ENCODE measurements at regions of chr17 and their contacts with region 1.

Region 1: DNA sequence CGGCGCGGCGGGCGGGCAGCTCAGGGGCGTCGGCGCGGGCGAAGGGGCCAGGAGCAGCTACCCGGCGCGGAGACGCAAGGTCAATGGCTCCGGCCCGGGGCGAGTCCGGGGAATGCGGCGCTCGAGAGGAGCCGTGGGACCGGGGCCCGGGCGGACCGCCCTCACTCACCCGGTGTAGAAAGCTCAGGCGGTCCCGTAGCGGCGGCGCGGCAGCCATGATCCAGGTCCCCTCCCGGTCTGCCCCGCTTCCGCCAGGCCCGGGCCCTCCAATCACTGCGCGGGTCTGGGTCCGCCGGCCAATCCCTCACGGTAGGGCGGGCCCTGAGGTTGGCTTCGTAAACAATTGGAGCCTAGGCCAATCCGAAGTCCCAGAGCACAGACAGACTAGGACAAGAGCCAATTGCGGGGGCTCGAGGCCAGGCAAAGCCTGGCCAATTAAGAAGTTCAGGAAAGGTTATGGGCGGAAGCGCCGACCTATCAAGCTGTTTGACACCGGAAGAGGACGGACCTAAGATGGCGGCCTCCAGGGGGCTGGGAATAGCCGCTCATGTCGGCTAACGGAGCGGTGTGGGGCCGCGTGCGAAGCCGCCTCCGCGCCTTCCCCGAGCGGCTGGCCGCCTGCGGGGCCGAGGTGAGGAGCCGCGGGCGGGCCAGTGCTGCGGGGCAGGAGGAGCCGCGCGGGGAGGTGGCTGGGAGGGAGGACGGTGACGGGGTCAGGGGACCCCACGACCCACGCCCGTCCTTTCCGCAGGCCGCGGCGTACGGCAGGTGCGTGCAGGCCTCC is at the starts of genes NDUFAF8 and TEPSIN:
- DNase-seq: peak; percentile 97 to 99
- ATAC-seq: peak; percentile 98 to 99
- H3K4me3 ChIP-seq: peak within 1 kb of the TSS; percentile 80 to 98 (median 94)
- H3K27ac ChIP-seq: peak within 1 kb of the TSS; percentile 71 to 95 (median 90)
- H3K4me1 ChIP-seq: peaks cover 21 to 26% of the 10 kb centered on the region in 2 donors
- H3K27me3 ChIP-seq: no peaks in the 10 kb centered on the region
- CTCF ChIP-seq: peak in 2 of 5 experiments; percentile 8 to 12
- POLR2A ChIP-seq: peak; percentile 71 to 73
- total RNA-seq, gene NDUFAF8: 39.4 to 700 (median 74.5) TPM
- total RNA-seq, gene TEPSIN: 15.5 to 32.9 (median 24.3) TPM

Region 2: DNA sequence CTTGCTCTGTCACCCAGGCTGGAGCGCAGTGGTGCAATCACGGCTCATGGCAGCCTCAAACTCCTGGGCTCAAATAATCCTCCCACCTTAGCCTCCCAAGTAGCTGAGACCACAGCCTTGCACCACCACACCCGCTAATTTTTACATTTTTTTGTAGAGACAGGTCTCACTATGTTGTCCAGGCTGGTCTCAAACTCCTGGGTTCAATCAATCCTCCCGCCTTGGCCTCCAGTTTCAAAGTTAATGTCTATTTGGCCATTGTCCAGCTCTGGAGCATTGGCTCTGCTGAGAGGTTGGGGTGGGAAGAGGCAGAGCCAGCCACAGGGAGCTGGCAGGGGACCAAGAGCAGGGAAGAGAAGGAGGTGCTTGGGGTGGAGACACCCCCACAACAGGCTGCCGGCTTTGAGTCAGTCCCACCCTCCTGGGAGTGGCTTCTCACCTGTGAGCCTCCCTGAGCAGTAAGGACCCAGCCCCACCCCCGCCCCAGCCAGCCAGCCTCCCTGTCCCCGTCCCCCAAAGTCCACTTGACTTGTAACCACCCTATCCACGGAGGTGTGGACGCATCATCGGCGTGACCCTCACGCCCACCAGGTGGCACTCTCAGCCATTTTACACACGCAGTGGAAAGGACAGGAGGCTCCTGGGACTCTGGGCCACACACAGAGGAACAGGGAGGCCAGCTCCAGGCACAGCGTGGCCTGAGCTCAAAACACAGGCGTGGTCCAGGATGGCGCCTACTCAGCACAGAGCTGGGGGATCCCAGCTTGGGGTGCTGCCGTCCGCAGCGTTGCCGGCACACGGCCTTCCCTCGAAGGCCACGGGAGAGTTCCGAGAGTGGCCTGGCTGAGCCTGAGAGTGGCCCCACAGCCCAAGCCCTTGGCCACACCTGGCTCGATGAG is 96.5 kb before region 1 on chr17:
- in situ Hi-C with region 1: loop called in 1 of 4 experiments (anchors 25 kb)
- intact Hi-C with region 1: loop called (anchors 1 kb)
- DNase-seq: peak; percentile 47 to 72
- ATAC-seq: peak; percentile 92 to 93
- H3K4me3 ChIP-seq: no peak overlapping the region
- H3K27ac ChIP-seq: no peak overlapping the region
- H3K4me1 ChIP-seq: peaks cover 0 to 6% of the 10 kb centered on the region in 2 donors
- H3K27me3 ChIP-seq: no peaks in the 10 kb centered on the region
- CTCF ChIP-seq: peak; percentile 40 to 75 (median 69)
- POLR2A ChIP-seq: no peak

Region 3: DNA sequence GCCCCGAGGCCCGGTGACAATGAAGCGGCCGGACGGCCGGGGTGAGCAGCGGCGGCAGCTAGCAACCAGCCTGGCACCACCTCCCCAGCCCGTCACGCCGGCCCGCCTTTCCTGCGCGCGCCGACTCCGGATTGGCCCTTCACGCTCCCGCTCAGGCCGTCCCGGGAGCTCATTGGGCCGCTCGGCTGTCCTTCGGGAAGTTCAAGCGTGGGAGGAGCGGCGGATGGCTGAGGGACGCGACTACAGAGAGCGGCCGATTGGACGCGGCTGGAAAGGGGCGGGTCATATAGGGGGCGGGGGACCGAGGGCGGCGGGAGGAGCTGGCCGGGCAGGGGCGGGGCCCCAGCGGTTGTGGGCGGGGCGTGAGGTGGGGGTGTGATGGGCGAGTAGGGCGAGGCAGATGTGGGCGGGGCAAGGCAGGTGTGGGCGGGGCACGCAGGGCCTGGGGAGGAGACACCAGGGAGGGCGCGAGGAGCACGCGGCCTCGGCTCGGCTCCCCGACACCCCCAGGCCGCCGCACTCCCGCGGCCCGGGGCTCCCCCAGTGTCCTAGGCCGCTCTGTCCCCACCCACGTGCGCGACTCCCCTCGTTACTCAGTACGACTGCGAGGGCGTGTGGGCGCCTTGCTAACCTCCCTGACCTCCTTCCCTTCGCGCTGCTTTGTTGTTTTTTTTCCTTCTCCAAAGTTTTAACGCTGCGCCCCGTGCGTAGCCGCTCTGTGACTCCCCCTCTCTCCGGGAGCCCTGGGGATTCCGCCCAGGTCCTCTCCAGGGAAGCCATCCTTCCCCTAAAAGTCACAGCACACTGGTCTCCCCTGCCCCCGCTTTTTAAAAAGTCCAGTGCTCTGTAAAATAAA is 15.9 kb before region 1 on chr17 and contains the start of gene CEP131:
- in situ Hi-C with region 1: no loop called
- intact Hi-C with region 1: loop called (anchors 1 kb)
- DNase-seq: peak; percentile 98 to 99
- ATAC-seq: peak; percentile 99
- H3K4me3 ChIP-seq: peak within 1 kb of the TSS; percentile 54 to 91 (median 74)
- H3K27ac ChIP-seq: peak within 1 kb of the TSS in 3 of 4 donors; percentile 29 to 47 (median 47)
- H3K4me1 ChIP-seq: peaks cover 11 to 18% of the 10 kb centered on the region in 2 donors
- H3K27me3 ChIP-seq: no peaks in the 10 kb centered on the region
- CTCF ChIP-seq: no peak
- POLR2A ChIP-seq: no peak
- total RNA-seq, gene CEP131: 6.0 to 8.8 (median 7.5) TPM

Region 4: GRCh38 chr17:81291662-81292061 is 52.7 kb after region 1 on chr17:
- in situ Hi-C with region 1: no loop called
- intact Hi-C with region 1: no loop called
- DNase-seq: peak; percentile 54 to 78
- ATAC-seq: peak; percentile 53 to 59
- H3K4me3 ChIP-seq: no peak overlapping the region
- H3K27ac ChIP-seq: peak overlapping the region in 3 of 4 donors; percentile 37 to 94 (median 55)
- H3K4me1 ChIP-seq: peaks cover 25 to 27% of the 10 kb centered on the region in 2 donors
- H3K27me3 ChIP-seq: no peaks in the 10 kb centered on the region
- CTCF ChIP-seq: peak; percentile 64 to 93 (median 88)
- POLR2A ChIP-seq: no peak

Region 5: DNA sequence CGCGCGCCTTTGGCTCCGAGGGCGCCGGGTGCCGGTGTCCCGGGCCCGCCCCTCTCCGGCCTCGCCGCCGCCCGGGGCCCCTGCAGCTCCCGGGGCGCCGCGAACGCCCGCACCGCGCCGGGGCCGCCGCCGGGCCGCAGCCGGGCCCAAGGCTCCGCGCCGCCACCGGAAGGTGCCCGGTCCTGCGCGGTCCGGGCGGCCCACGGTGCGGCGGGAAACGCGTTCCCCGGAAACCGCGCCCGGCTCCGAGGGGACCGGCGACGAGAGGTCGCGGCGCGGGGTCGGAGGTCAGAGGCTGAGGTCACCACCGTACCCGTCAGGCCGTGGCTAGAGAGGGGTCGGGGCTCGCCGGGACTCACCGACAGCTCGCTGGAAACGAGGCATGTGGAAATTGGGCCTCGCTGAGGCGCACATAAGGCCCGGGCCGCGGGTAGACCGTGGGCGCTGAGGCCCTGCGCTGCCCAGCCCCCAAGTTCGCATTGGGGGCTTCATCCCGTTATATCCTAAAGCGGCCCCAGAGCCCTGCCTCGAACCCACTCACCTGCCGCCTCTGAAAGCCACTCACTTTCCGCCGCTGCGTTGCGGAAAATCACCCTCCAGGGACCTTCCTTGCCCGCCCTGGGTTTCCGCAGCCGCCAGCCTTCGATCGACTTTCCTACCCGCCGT is 826.8 kb after region 1 on chr17 and contains the start of gene DUS1L:
- in situ Hi-C with region 1: no loop called
- intact Hi-C with region 1: no loop called
- DNase-seq: peak; percentile 31 to 54
- ATAC-seq: peak; percentile 85 to 94
- H3K4me3 ChIP-seq: peak within 1 kb of the TSS; percentile 87 to 96 (median 90)
- H3K27ac ChIP-seq: peak within 1 kb of the TSS; percentile 80 to 93 (median 88)
- H3K4me1 ChIP-seq: peaks cover 13 to 27% of the 10 kb centered on the region in 2 donors
- H3K27me3 ChIP-seq: no peaks in the 10 kb centered on the region
- CTCF ChIP-seq: peak in 1 of 5 experiments; percentile 27
- POLR2A ChIP-seq: peak in 1 of 2 donors; percentile 65
- total RNA-seq, gene DUS1L: 54.6 to 119 (median 83.2) TPM